ENCODE measurements at regions of chr11 and their contacts with region 1.

Region 1: GRCh38 chr11:57644748-57645688 is 4.7 kb downstream of the YPEL4 start:
- DNase-seq: peak; percentile 83
- H3K4me3 Mint-ChIP-seq: no peak overlapping the region
- H3K27ac Mint-ChIP-seq: no peak overlapping the region
- H3K4me1 Mint-ChIP-seq: peaks cover 28% of the 10 kb centered on the region
- H3K27me3 Mint-ChIP-seq: peaks cover 35% of the 10 kb centered on the region
- CTCF ChIP-seq: peak; percentile 59

Region 2: GRCh38 chr11:57345555-57346211 is 299.3 kb before region 1 on chr11:
- CTCF ChIA-PET with region 1: interaction called, 29 read pairs
- POLR2A ChIA-PET with region 1: interaction called, 4 read pairs
- intact Hi-C with region 1: loop called (anchors 5 kb)
- DNase-seq: peak; percentile 85
- H3K4me3 Mint-ChIP-seq: no peak overlapping the region
- H3K27ac Mint-ChIP-seq: no peak overlapping the region
- H3K4me1 Mint-ChIP-seq: no peaks in the 10 kb centered on the region
- H3K27me3 Mint-ChIP-seq: no peaks in the 10 kb centered on the region
- CTCF ChIP-seq: peak; percentile 90

Region 3: DNA sequence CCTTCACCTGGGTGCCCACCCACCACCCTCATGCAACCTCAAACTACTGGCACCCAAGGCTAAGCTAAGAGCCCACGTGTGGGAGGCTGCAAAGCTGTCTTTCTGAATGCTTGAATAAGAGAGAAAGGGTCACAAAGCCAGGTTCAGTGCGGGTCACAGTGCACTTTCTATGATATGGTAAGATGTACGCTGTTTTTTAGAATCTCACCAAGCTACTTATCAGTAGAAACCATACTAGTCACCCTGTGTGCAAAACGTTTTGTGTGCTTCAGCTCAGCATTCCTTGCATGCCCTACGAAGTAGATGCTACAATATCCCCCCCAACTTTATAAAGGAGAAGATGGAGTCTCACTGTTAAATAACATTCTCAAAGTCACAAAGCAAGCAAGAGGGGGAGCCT is 292.0 kb before region 1 on chr11:
- CTCF ChIA-PET with region 1: interaction called, 14 read pairs
- POLR2A ChIA-PET with region 1: no interaction called
- intact Hi-C with region 1: loop called (anchors 5 kb)
- DNase-seq: no peak
- H3K4me3 Mint-ChIP-seq: no peak overlapping the region
- H3K27ac Mint-ChIP-seq: no peak overlapping the region
- H3K4me1 Mint-ChIP-seq: no peaks in the 10 kb centered on the region
- H3K27me3 Mint-ChIP-seq: no peaks in the 10 kb centered on the region
- CTCF ChIP-seq: no peak

Region 4: DNA sequence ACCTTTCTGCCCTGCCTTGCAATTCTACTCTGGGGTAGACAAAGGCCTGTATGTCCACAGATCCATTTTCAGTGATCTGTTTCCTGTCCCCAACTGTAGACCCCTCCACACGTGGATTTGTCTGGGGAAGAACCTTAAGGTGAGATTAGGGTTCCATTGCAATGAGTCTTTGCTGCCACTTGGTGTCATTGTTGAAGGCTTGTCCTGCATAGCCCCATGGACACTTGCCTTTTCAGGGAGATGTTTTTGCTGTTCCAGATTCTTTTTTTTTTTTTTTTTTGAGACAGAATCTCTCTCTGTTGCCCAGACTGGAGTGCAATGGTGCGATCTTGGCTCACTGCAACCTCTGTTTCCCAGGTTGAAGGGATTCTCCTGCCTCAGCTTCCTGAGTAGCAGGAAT is 25.7 kb before region 1 on chr11:
- CTCF ChIA-PET with region 1: interaction called, 26 read pairs
- POLR2A ChIA-PET with region 1: no interaction called
- intact Hi-C with region 1: no loop called
- DNase-seq: no peak
- H3K4me3 Mint-ChIP-seq: no peak overlapping the region
- H3K27ac Mint-ChIP-seq: no peak overlapping the region
- H3K4me1 Mint-ChIP-seq: no peaks in the 10 kb centered on the region
- H3K27me3 Mint-ChIP-seq: peaks cover 18% of the 10 kb centered on the region
- CTCF ChIP-seq: no peak

Region 5: DNA sequence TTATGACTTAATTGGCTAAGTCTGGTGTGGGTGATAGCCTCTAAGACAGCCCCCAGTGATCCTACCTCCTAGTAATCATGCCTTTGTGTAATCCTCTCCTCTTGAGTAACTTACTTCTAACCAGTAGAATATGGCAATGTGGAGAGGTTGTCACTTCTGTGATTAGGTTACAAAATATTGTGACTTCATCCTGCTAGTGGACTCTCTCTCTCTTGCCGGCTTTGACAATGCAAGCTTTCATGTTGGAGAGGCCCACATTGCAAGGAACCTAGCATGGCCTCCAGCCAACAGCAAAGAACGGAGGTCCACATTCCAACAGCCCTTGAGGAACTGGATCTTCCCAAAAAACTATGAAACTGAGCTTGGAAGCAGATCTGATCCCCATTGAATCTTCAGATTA is 14.8 kb before region 1 on chr11:
- CTCF ChIA-PET with region 1: interaction called, 36 read pairs
- POLR2A ChIA-PET with region 1: no interaction called
- intact Hi-C with region 1: no loop called
- DNase-seq: no peak
- H3K4me3 Mint-ChIP-seq: no peak overlapping the region
- H3K27ac Mint-ChIP-seq: no peak overlapping the region
- H3K4me1 Mint-ChIP-seq: no peaks in the 10 kb centered on the region
- H3K27me3 Mint-ChIP-seq: peaks cover 20% of the 10 kb centered on the region
- CTCF ChIP-seq: no peak

Region 6: DNA sequence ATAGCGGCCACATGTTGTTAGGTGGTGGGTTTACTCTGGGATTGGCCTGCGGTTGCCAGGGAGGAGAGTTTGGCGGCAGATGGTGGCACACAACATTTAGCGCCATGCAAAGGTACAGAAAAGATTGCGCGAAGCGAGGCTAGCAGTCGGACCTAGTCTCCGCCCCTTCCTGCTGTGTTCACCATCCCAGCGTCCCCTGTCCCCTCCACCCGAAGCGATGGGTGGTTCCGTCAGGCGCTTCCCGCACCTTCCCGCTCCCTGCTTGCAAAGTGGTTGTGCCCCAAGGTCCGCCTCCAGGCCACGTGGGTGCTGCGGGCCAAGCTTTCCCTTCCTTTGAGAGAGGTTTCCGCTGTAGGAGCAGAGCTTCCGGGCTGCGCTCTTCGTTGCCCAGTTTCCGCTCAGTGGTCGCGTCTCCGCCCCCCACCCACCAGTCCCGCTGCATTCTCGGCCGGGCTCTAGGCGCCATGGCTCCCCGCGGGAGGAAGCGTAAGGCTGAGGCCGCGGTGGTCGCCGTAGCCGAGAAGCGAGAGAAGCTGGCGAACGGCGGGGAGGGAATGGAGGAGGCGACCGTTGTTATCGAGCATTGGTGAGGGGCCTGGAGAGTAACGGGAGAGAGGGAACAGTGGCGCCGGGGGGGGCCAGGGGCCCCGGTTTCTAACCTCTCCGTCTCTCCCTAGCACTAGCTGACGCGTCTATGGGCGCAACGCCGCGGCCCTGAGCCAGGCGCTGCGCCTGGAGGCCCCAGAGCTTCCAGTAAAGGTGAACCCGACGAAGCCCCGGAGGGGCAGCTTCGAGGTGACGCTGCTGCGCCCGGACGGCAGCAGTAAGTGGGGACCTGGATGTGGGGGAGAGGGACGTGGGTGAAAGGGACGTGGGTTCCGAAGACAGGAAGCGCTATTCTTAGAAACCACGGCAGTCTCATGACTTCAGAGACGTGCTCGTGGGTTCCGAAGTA is 96.4 kb after region 1 on chr11 and contains the start of gene SELENOH:
- CTCF ChIA-PET with region 1: no interaction called
- POLR2A ChIA-PET with region 1: no interaction called
- intact Hi-C with region 1: no loop called
- DNase-seq: peak; percentile 90
- H3K4me3 Mint-ChIP-seq: peak within 1 kb of the TSS; percentile 89
- H3K27ac Mint-ChIP-seq: peak within 1 kb of the TSS; percentile 99
- H3K4me1 Mint-ChIP-seq: no peaks in the 10 kb centered on the region
- H3K27me3 Mint-ChIP-seq: no peaks in the 10 kb centered on the region
- CTCF ChIP-seq: no peak
- total RNA-seq, gene SELENOH: 60.3 and 84.5 TPM in 2 replicates

Region 7: GRCh38 chr11:58524232-58525036 is 879.4 kb after region 1 on chr11:
- CTCF ChIA-PET with region 1: no interaction called
- POLR2A ChIA-PET with region 1: no interaction called
- intact Hi-C with region 1: loop called (anchors 5 kb)
- DNase-seq: peak; percentile 78
- H3K4me3 Mint-ChIP-seq: no peak overlapping the region
- H3K27ac Mint-ChIP-seq: no peak overlapping the region
- H3K4me1 Mint-ChIP-seq: peaks cover 5% of the 10 kb centered on the region
- H3K27me3 Mint-ChIP-seq: peaks cover 5% of the 10 kb centered on the region
- CTCF ChIP-seq: peak; percentile 83